H1 (cell line): ENCODE measurements at regions of chr6 and their contacts with region 1.

Region 1: GRCh38 chr6:14316635-14317386 is 199.2 kb downstream of the CD83 start:
- DNase-seq: no peak
- H3K4me3 ChIP-seq: no peak overlapping the region
- H3K27ac ChIP-seq: no peak overlapping the region
- H3K4me1 ChIP-seq: peaks cover 0 to 9% (median 4%) of the 10 kb centered on the region in 4 experiments; a peak in 4 of 7 replicates
- H3K27me3 ChIP-seq: no peaks in the 10 kb centered on the region
- CTCF ChIP-seq: peak; percentile 40 to 49 (median 48)
- EP300 ChIP-seq: no peak
- POLR2A ChIP-seq: no peak
- RAD21 ChIP-seq: peak; percentile 37 to 56; a peak in 3 of 4 replicates

Region 2: GRCh38 chr6:14241255-14242070 is 75.3 kb before region 1 on chr6:
- CTCF ChIA-PET with region 1: no interaction called
- POLR2A ChIA-PET with region 1: no interaction called
- DNase-seq: peak in 1 of 2 experiments; percentile 20
- H3K4me3 ChIP-seq: no peak overlapping the region
- H3K27ac ChIP-seq: no peak overlapping the region
- H3K4me1 ChIP-seq: peaks cover 0 to 3% (median 0%) of the 10 kb centered on the region in 4 experiments; a peak in 1 of 7 replicates
- H3K27me3 ChIP-seq: no peaks in the 10 kb centered on the region
- CTCF ChIP-seq: no peak
- EP300 ChIP-seq: no peak
- POLR2A ChIP-seq: no peak
- RAD21 ChIP-seq: no peak

Region 3: GRCh38 chr6:14306151-14306906 is 10.5 kb before region 1 on chr6:
- CTCF ChIA-PET with region 1: interaction called, 11 read pairs
- POLR2A ChIA-PET with region 1: no interaction called
- DNase-seq: no peak
- H3K4me3 ChIP-seq: no peak overlapping the region
- H3K27ac ChIP-seq: no peak overlapping the region
- H3K4me1 ChIP-seq: peaks cover 0 to 4% (median under 1%) of the 10 kb centered on the region in 4 experiments; a peak in 2 of 7 replicates
- H3K27me3 ChIP-seq: 0 out of 7 replicates have a peak, but pooled peaks cover 0 to 2% (median 0%) of the 10 kb centered on the region in 4 experiments
- CTCF ChIP-seq: no peak
- EP300 ChIP-seq: no peak
- POLR2A ChIP-seq: no peak
- RAD21 ChIP-seq: no peak